T-cell (primary cell): ENCODE measurements at regions of chr12 and their contacts with region 1.

Region 1: GRCh38 chr12:6688999-6689882 is at the start of gene ZNF384:
- DNase-seq: peak; percentile 84 to 98 (median 95)
- ATAC-seq: peak; percentile 81 to 84 (median 82)
- H3K4me3 ChIP-seq: peak within 1 kb of the TSS; percentile 75 to 84
- H3K4me3 Mint-ChIP-seq: peak within 1 kb of the TSS; percentile 89 to 92 (median 91)
- H3K27ac ChIP-seq: peak within 1 kb of the TSS; percentile 95
- H3K27ac Mint-ChIP-seq: peak within 1 kb of the TSS; percentile 93 to 97
- H3K4me1 ChIP-seq: peaks cover 15 to 33% of the 10 kb centered on the region in 2 experiments
- H3K4me1 Mint-ChIP-seq: peaks cover 52 to 65% (median 63%) of the 10 kb centered on the region in 3 donors
- H3K27me3 ChIP-seq: peaks cover 0 to 2% of the 10 kb centered on the region in 2 experiments
- H3K27me3 Mint-ChIP-seq: no peaks in the 10 kb centered on the region
- total RNA-seq, gene ZNF384: 68.6 to 82.9 (median 79.4) TPM

Region 2: GRCh38 chr12:6167327-6168259 is 521.6 kb before region 1 on chr12:
- CTCF ChIA-PET with region 1: no interaction called
- POLR2A ChIA-PET with region 1: no interaction called
- DNase-seq: peak in 5 of 35 experiments; percentile 4 to 51 (median 20)
- ATAC-seq: peak; percentile 28 to 76 (median 68)
- H3K4me3 ChIP-seq: no peak overlapping the region
- H3K4me3 Mint-ChIP-seq: peak overlapping the region in 2 of 3 donors; percentile 41 to 65
- H3K27ac ChIP-seq: peak overlapping the region; percentile 18
- H3K27ac Mint-ChIP-seq: peak overlapping the region; percentile 36 to 49
- H3K4me1 ChIP-seq: peaks cover 7 to 28% of the 10 kb centered on the region in 2 experiments
- H3K4me1 Mint-ChIP-seq: peaks cover 29 to 37% (median 30%) of the 10 kb centered on the region in 3 donors
- H3K27me3 ChIP-seq: peaks cover 0 to 20% of the 10 kb centered on the region in 2 experiments
- H3K27me3 Mint-ChIP-seq: peaks cover 0 to 5% of the 10 kb centered on the region in 2 donors

Region 3: DNA sequence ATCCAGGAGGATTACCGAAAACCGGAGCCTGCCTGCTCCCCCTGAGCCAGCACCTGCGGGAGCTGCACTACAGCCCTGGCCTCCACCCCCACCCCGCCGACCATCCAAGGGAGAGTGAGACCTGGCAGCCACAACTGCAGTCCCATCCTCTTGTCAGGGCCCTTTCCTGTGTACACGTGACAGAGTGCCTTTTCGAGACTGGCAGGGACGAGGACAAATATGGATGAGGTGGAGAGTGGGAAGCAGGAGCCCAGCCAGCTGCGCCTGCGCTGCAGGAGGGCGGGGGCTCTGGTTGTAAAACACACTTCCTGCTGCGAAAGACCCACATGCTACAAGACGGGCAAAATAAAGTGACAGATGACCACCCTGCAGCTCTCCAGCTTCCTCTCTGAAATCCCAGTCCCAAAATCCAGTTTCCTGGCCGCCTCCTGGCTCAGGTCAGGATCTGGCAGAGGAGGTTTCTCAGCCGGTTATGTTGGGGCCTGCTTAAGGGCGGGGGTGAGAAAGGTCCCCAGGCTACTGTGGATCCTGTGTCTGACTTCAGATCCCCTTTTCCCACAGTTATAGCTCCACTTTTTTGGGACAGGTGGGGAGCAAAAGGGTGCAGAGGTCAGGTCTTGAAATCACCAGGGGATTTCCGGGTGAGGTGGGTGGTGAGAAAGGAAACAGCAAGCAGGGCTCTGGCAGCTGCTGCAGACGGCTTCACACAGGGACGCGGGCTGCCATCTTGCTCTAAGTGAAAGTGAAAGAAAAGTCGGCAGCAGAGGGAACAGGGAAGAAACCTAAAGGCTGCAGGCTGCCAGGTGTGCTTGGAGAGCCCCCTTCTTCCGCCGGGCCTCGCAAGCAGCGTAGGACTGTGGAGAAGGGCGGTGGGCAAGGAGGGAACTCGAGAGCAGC is 237.6 kb before region 1 on chr12 and contains the start of gene TAPBPL:
- CTCF ChIA-PET with region 1: no interaction called
- POLR2A ChIA-PET with region 1: interaction called in 1 of 2 experiments, 12 read pairs
- DNase-seq: peak; percentile 61 to 93 (median 80)
- ATAC-seq: peak; percentile 85 to 95 (median 88)
- H3K4me3 ChIP-seq: peak within 1 kb of the TSS; percentile 93 to 94
- H3K4me3 Mint-ChIP-seq: peak within 1 kb of the TSS; percentile 97 to 99 (median 98)
- H3K27ac ChIP-seq: peak within 1 kb of the TSS; percentile 98
- H3K27ac Mint-ChIP-seq: peak within 1 kb of the TSS; percentile 99 to 100
- H3K4me1 ChIP-seq: peaks cover 30 to 74% of the 10 kb centered on the region in 2 experiments
- H3K4me1 Mint-ChIP-seq: peaks cover 71 to 85% (median 76%) of the 10 kb centered on the region in 3 donors
- H3K27me3 ChIP-seq: no peaks in the 10 kb centered on the region
- H3K27me3 Mint-ChIP-seq: no peaks in the 10 kb centered on the region
- total RNA-seq, gene TAPBPL: 22.6 to 77.0 (median 60.3) TPM

Region 4: DNA sequence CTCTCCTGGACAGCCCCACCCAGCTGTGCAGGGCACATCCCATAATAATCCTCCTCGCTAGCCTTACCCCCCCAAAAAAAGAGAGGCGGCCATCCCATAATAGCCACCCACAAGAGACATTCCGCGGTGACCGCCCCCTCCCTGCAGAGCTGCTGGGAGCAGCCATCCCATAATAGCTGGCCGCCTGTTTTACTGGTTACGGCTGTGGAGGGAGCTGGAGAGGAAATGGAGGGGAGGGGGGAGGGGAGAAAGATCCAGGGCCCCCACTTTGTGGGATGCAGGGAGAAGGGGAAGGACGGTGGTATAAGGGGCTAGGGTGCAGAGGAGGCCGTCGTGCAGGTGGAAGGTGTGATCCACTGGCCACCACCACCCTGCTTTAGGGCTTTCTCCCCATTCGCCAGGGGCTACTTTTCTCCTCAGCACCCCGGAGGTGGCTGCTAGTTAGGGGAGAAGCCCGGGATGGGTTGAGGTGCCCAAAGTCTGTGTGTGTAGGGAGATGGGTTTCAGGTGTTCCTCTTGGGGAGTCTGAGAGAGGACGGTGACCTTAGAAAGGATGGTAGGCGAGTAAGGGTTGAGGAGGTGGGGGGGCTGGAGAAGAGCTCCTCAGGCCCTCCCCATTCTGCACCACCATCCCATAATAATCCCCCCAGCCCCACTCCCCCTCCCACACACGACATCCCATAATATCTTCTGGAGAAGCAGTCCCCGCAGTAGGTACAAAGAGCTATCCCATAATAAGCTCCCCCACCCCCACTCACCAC is 76.0 kb before region 1 on chr12:
- CTCF ChIA-PET with region 1: interaction called, 3 to 14 read pairs
- POLR2A ChIA-PET with region 1: interaction called in 1 of 2 experiments, 8 read pairs
- DNase-seq: peak in 4 of 35 experiments; percentile 19 to 55 (median 48)
- ATAC-seq: peak; percentile 1 to 23 (median 7)
- H3K4me3 ChIP-seq: no peak overlapping the region
- H3K4me3 Mint-ChIP-seq: peak overlapping the region in 1 of 3 donors; percentile 72
- H3K27ac ChIP-seq: peak overlapping the region; percentile 65
- H3K27ac Mint-ChIP-seq: peak overlapping the region; percentile 94 to 96
- H3K4me1 ChIP-seq: peaks cover 20 to 44% of the 10 kb centered on the region in 2 experiments
- H3K4me1 Mint-ChIP-seq: peaks cover 38 to 57% (median 52%) of the 10 kb centered on the region in 3 donors
- H3K27me3 ChIP-seq: no peaks in the 10 kb centered on the region
- H3K27me3 Mint-ChIP-seq: no peaks in the 10 kb centered on the region

Region 5: DNA sequence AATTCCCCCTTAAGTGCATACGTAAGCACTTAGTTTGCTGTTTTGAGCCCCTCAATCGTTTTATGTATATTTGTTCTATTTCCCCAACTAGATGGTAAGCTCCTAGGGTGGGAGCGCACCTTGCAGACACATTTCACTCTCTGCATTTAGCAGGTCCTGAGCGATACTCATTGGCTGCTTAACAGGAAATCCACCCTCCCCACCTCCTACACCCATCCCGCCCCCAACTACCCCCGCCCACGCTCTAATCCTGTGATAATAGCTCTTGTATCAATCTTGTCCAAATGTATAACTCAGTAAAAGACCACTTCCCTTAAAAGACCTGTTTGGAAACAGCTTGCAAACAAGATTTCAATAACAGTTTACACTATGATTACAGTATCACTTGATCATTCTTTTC is 61.6 kb before region 1 on chr12:
- CTCF ChIA-PET with region 1: interaction called in 1 of 2 experiments, 11 read pairs
- POLR2A ChIA-PET with region 1: interaction called in 1 of 2 experiments, 5 read pairs
- DNase-seq: peak in 27 of 35 experiments; percentile 23 to 79 (median 51)
- ATAC-seq: peak; percentile 76 to 86 (median 80)
- H3K4me3 ChIP-seq: peak overlapping the region; percentile 45 to 49
- H3K4me3 Mint-ChIP-seq: peak overlapping the region; percentile 74 to 84 (median 82)
- H3K27ac ChIP-seq: peak overlapping the region; percentile 27
- H3K27ac Mint-ChIP-seq: peak overlapping the region; percentile 84 to 86
- H3K4me1 ChIP-seq: peaks cover 23 to 48% of the 10 kb centered on the region in 2 experiments
- H3K4me1 Mint-ChIP-seq: peaks cover 44 to 49% (median 45%) of the 10 kb centered on the region in 3 donors
- H3K27me3 ChIP-seq: no peaks in the 10 kb centered on the region
- H3K27me3 Mint-ChIP-seq: no peaks in the 10 kb centered on the region

Region 6: DNA sequence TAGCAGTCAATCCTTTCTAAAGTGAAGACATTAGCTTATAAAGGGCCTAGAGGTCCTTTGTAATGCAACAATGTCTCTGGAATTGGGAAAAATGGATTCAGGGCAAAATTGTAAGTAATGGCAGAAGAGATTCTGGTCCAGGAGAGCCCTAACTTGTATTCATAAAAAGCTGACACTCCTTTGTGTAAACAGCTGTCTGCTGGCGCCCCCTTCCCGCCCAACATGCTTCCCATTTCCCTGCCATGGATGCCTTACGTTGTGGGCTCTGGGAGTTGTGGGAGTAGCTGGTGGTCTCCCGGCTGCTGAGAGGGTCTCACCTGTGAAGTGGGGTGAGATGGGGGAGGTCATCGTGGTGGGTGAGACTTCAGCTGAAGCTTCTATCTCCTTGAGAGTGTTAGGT is 44.3 kb before region 1 on chr12:
- CTCF ChIA-PET with region 1: no interaction called
- POLR2A ChIA-PET with region 1: no interaction called
- DNase-seq: peak in 1 of 35 experiments; percentile 27
- ATAC-seq: no peak
- H3K4me3 ChIP-seq: no peak overlapping the region
- H3K4me3 Mint-ChIP-seq: no peak overlapping the region
- H3K27ac ChIP-seq: no peak overlapping the region
- H3K27ac Mint-ChIP-seq: peak overlapping the region in 1 of 2 donors; percentile 64
- H3K4me1 ChIP-seq: peaks cover 0 to 13% of the 10 kb centered on the region in 2 experiments
- H3K4me1 Mint-ChIP-seq: peaks cover 10 to 25% (median 16%) of the 10 kb centered on the region in 3 donors
- H3K27me3 ChIP-seq: peaks cover 0 to 10% of the 10 kb centered on the region in 2 experiments
- H3K27me3 Mint-ChIP-seq: no peaks in the 10 kb centered on the region

Region 7: DNA sequence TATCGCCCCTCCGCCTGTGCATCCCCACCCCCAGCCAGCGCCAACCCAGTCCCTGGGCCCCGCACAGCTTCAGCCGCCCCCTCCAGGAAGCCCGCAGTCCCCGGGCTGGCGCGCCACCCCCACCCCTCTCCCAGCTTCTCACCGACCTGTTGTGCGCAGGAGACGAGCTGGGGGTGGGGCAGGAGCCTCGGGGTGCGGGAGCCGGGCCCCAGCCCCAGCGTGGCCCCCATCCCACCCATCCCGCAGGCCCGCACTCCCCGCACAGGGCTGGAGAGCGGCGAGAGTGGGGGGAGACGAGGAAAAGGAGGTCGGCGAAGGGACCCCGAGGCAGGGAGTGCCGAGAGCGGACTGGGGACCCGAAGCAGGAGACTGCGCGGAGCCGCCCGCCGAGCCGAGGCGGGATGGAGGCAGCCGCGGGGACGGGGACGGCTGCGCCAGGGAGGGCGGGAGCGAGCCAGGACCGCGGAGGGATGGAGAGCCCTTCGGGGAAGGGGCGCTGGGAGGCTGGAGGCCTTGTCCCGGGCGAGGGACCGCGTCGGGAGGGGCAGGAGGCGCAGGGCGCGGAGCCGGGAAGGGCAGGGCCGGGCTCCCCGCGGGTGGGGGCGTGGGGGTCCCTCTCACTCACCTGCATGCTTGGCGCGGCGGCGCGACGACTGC is 10.9 kb after region 1 on chr12:
- CTCF ChIA-PET with region 1: interaction called in 1 of 2 experiments, 3 read pairs
- POLR2A ChIA-PET with region 1: interaction called in 1 of 2 experiments, 10 read pairs
- DNase-seq: peak in 6 of 35 experiments; percentile 5 to 30 (median 16)
- ATAC-seq: peak; percentile 52 to 58 (median 54)
- H3K4me3 ChIP-seq: peak overlapping the region; percentile 36 to 51
- H3K4me3 Mint-ChIP-seq: peak overlapping the region; percentile 53 to 80 (median 72)
- H3K27ac ChIP-seq: no peak overlapping the region
- H3K27ac Mint-ChIP-seq: no peak overlapping the region
- H3K4me1 ChIP-seq: peaks cover 7 to 23% of the 10 kb centered on the region in 2 experiments
- H3K4me1 Mint-ChIP-seq: peaks cover 18 to 42% (median 20%) of the 10 kb centered on the region in 3 donors
- H3K27me3 ChIP-seq: peaks cover 23 to 66% of the 10 kb centered on the region in 2 experiments
- H3K27me3 Mint-ChIP-seq: peaks cover 41 to 57% of the 10 kb centered on the region in 2 donors

Region 8: GRCh38 chr12:6825398-6826124 is 136.3 kb after region 1 on chr12:
- CTCF ChIA-PET with region 1: interaction called, 3 to 12 read pairs
- POLR2A ChIA-PET with region 1: no interaction called
- DNase-seq: peak; percentile 36 to 87 (median 71)
- ATAC-seq: peak; percentile 46 to 69 (median 50)
- H3K4me3 ChIP-seq: no peak overlapping the region
- H3K4me3 Mint-ChIP-seq: no peak overlapping the region
- H3K27ac ChIP-seq: no peak overlapping the region
- H3K27ac Mint-ChIP-seq: peak overlapping the region in 1 of 2 donors; percentile 34
- H3K4me1 ChIP-seq: peaks cover 3 to 47% of the 10 kb centered on the region in 2 experiments
- H3K4me1 Mint-ChIP-seq: peaks cover 29 to 52% (median 33%) of the 10 kb centered on the region in 3 donors
- H3K27me3 ChIP-seq: peaks cover 0 to 91% of the 10 kb centered on the region in 2 experiments
- H3K27me3 Mint-ChIP-seq: peaks cover 16 to 64% of the 10 kb centered on the region in 2 donors

Region 9: DNA sequence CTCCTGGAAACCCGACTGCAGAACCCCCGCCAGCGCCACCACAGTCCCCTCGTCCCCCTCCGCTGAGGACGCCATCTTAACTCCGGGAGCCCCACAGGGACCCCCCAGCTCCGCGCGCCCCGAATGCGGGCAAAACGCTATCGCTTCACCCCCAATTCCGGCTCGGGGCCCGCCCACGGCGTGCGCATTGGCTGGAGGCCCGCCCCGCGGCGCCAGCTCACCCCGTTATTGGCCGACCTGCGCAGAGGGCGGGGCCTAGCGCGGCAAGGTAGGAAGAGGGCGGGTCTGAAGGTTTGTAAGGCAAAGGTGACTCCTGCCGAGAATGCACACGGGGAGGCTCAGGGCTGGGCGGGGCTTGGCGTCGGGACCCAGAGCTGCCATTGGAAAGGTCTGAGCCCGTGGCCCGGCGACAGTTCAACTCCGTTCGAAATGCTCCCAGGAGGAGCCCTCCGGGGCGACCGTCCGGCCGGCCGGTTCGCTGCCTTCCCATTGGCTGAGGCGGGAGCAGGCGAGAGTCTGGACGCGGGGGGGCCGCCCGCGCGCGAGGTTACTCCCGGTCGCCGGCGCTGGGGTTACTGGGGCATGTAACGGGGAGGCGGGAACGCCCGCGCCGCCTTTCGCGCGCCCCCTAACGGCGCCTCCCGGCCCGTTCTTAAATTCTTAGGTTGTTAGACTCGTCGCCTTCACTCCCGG is 329.3 kb after region 1 on chr12 and contains the start of gene LPCAT3:
- CTCF ChIA-PET with region 1: no interaction called
- POLR2A ChIA-PET with region 1: no interaction called
- DNase-seq: peak; percentile 93 to 99 (median 96)
- ATAC-seq: peak; percentile 94 to 98 (median 97)
- H3K4me3 ChIP-seq: peak within 1 kb of the TSS; percentile 95 to 96
- H3K4me3 Mint-ChIP-seq: peak within 1 kb of the TSS; percentile 89 to 98 (median 91)
- H3K27ac ChIP-seq: peak within 1 kb of the TSS; percentile 86
- H3K27ac Mint-ChIP-seq: peak within 1 kb of the TSS; percentile 80
- H3K4me1 ChIP-seq: peaks cover 9 to 21% of the 10 kb centered on the region in 2 experiments
- H3K4me1 Mint-ChIP-seq: peaks cover 29 to 30% (median 30%) of the 10 kb centered on the region in 3 donors
- H3K27me3 ChIP-seq: no peaks in the 10 kb centered on the region
- H3K27me3 Mint-ChIP-seq: no peaks in the 10 kb centered on the region
- total RNA-seq, gene LPCAT3: 19.3 to 27.6 (median 22.6) TPM

Region 10: GRCh38 chr12:7099290-7099996 is 410.2 kb after region 1 on chr12:
- CTCF ChIA-PET with region 1: no interaction called
- POLR2A ChIA-PET with region 1: no interaction called
- DNase-seq: no peak
- ATAC-seq: no peak
- H3K4me3 ChIP-seq: no peak overlapping the region
- H3K4me3 Mint-ChIP-seq: no peak overlapping the region
- H3K27ac ChIP-seq: no peak overlapping the region
- H3K27ac Mint-ChIP-seq: no peak overlapping the region
- H3K4me1 ChIP-seq: no peaks in the 10 kb centered on the region
- H3K4me1 Mint-ChIP-seq: peaks cover 18 to 20% (median 19%) of the 10 kb centered on the region in 3 donors
- H3K27me3 ChIP-seq: no peaks in the 10 kb centered on the region
- H3K27me3 Mint-ChIP-seq: no peaks in the 10 kb centered on the region